ENCODE measurements at regions of chr16 and their contacts with region 1.

Region 1: GRCh38 chr16:2155091-2156021 is at the start of gene TRAF7:
- DNase-seq: peak; percentile 91
- ATAC-seq: peak; percentile 92
- H3K4me3 Mint-ChIP-seq: peak within 1 kb of the TSS; percentile 95
- H3K27ac Mint-ChIP-seq: peak within 1 kb of the TSS; percentile 83
- H3K4me1 Mint-ChIP-seq: peaks cover 77% of the 10 kb centered on the region
- H3K27me3 Mint-ChIP-seq: no peaks in the 10 kb centered on the region
- CTCF ChIP-seq: no peak
- total RNA-seq, gene TRAF7: 72.7 and 78.1 TPM in 2 replicates

Region 2: DNA sequence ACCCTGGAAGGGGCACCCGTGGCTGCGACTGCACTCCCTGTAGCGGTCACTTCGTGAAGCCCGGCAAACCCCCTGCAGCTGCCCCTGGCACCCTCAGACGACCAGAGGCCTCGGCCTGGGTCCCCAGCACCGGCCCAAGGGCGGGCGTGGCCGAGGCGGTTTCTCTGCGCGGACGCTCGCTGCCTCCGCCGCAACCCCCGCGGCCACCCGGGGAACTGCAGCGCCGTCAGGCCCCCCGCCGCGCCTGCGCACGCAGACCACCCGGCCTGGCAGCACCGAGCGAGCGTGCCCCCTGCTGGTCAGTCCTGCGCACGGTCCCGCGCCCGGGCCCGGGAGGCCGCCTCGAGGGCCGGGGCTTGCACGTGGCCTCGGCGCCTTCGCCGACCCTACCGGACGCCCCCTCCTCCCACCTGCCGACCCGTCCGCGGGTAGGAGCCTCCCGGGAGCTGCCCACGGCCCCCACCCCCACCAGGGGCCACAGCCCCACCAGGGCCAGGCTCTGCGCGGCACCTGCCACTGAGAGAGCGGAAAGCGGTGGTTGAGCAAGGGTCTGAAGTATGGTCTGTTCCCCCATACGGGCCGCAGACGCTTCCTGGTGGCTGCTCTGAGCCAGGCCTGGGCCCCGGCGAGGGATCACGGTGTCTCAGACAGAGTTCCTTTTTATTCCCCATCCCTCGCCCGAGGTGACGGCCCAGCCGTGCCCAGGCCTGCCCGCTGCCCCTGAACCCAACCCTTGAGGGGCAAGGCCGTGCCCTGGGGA is 225.6 kb before region 1 on chr16:
- CTCF ChIA-PET with region 1: no interaction called
- POLR2A ChIA-PET with region 1: no interaction called
- intact Hi-C with region 1: no loop called
- DNase-seq: peak; percentile 97
- ATAC-seq: peak; percentile 98
- H3K4me3 Mint-ChIP-seq: peak overlapping the region; percentile 64
- H3K27ac Mint-ChIP-seq: no peak overlapping the region
- H3K4me1 Mint-ChIP-seq: peaks cover 2% of the 10 kb centered on the region
- H3K27me3 Mint-ChIP-seq: peaks cover 6% of the 10 kb centered on the region
- CTCF ChIP-seq: peak; percentile 92

Region 3: GRCh38 chr16:1964506-1965395 is 190.6 kb before region 1 on chr16 and contains the start of gene RPS2:
- CTCF ChIA-PET with region 1: no interaction called
- POLR2A ChIA-PET with region 1: interaction called, 36 read pairs
- intact Hi-C with region 1: no loop called
- DNase-seq: peak; percentile 95
- ATAC-seq: peak; percentile 93
- H3K4me3 Mint-ChIP-seq: peak within 1 kb of the TSS; percentile 92
- H3K27ac Mint-ChIP-seq: peak within 1 kb of the TSS; percentile 94
- H3K4me1 Mint-ChIP-seq: peaks cover 50% of the 10 kb centered on the region
- H3K27me3 Mint-ChIP-seq: no peaks in the 10 kb centered on the region
- CTCF ChIP-seq: no peak
- total RNA-seq, gene RPS2: 5,116 and 5,913 TPM in 2 replicates

Region 4: DNA sequence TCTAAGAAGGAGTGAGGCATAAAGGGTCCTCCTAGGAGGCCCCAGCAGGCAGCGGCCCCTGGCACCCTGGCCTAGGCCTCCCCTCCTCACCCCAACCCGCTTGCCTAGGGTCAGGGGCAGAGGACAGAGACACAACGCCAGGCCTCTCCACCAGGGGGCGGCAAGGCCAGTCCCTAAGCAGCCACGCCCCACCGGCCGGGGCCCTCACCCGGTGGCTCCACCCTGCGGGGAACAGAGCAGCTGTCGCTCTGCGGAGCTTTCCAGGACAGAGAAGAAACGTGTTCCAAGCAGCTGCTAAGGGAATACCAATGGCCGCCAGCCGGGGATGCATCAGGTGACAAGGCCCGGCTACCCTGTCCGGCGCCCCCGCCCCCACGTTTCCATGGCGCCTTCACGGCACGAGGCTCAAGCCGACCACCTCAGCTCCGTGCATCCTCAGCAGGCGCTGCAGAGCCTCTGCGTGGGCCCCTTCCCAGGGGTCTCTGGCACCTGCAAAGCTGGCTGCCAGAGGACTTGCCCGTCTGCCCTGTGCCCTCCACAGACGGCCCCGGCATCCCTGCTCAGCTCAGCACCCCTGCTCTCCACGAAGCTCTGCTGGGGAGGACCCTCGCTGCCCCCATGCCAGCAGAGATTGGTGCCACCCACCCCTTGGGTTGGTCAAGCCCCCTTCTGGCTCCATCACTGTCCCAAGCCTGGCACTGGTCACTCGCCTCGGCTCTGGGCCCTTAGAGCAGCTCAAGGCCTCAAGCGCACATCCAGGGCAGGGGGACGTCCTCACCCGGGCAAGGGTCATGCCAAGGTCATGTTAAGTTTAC is 151.3 kb before region 1 on chr16:
- CTCF ChIA-PET with region 1: interaction called, 14 read pairs
- POLR2A ChIA-PET with region 1: interaction called, 36 read pairs
- intact Hi-C with region 1: no loop called
- DNase-seq: peak; percentile 80
- ATAC-seq: peak; percentile 99
- H3K4me3 Mint-ChIP-seq: no peak overlapping the region
- H3K27ac Mint-ChIP-seq: no peak overlapping the region
- H3K4me1 Mint-ChIP-seq: peaks cover 38% of the 10 kb centered on the region
- H3K27me3 Mint-ChIP-seq: no peaks in the 10 kb centered on the region
- CTCF ChIP-seq: peak; percentile 47

Region 5: GRCh38 chr16:2121853-2122252 is 33.5 kb before region 1 on chr16:
- CTCF ChIA-PET with region 1: interaction called, 5 read pairs
- POLR2A ChIA-PET with region 1: interaction called, 10 read pairs
- intact Hi-C with region 1: no loop called
- DNase-seq: no peak
- ATAC-seq: no peak
- H3K4me3 Mint-ChIP-seq: no peak overlapping the region
- H3K27ac Mint-ChIP-seq: no peak overlapping the region
- H3K4me1 Mint-ChIP-seq: peaks cover 15% of the 10 kb centered on the region
- H3K27me3 Mint-ChIP-seq: no peaks in the 10 kb centered on the region
- CTCF ChIP-seq: no peak

Region 6: GRCh38 chr16:2213817-2214720 is 58.7 kb after region 1 on chr16:
- CTCF ChIA-PET with region 1: no interaction called
- POLR2A ChIA-PET with region 1: interaction called, 19 read pairs
- intact Hi-C with region 1: no loop called
- DNase-seq: no peak
- ATAC-seq: no peak
- H3K4me3 Mint-ChIP-seq: peak overlapping the region; percentile 69
- H3K27ac Mint-ChIP-seq: no peak overlapping the region
- H3K4me1 Mint-ChIP-seq: peaks cover 14% of the 10 kb centered on the region
- H3K27me3 Mint-ChIP-seq: no peaks in the 10 kb centered on the region
- CTCF ChIP-seq: no peak

Region 7: GRCh38 chr16:2474877-2475412 is 319.6 kb after region 1 on chr16 and contains the start of gene TBC1D24:
- CTCF ChIA-PET with region 1: no interaction called
- POLR2A ChIA-PET with region 1: interaction called, 18 read pairs
- intact Hi-C with region 1: no loop called
- DNase-seq: peak; percentile 89
- ATAC-seq: peak; percentile 79
- H3K4me3 Mint-ChIP-seq: peak within 1 kb of the TSS; percentile 83
- H3K27ac Mint-ChIP-seq: no peak within 1 kb of the TSS
- H3K4me1 Mint-ChIP-seq: peaks cover 25% of the 10 kb centered on the region
- H3K27me3 Mint-ChIP-seq: peaks cover 10% of the 10 kb centered on the region
- CTCF ChIP-seq: no peak
- total RNA-seq, gene TBC1D24: 9.1 and 12.6 TPM in 2 replicates

Measured in activated B cell treated with CpG ODN at 0.5 μM for 24 hours (primary cell).